Adrenal gland (tissue), 19 donors: ENCODE measurements at regions of chr2 and their contacts with region 1.

Region 1: GRCh38 chr2:215949991-215950404 is 63.4 kb downstream of the MREG start:
- DNase-seq: no peak
- H3K4me3 ChIP-seq: no peak overlapping the region
- H3K27ac ChIP-seq: no peak overlapping the region
- H3K4me1 ChIP-seq: peaks cover 0 to 7% of the 10 kb centered on the region in 2 donors
- H3K27me3 ChIP-seq: no peaks in the 10 kb centered on the region
- CTCF ChIP-seq: peak; percentile 26 to 68 (median 53)
- POLR2A ChIP-seq: no peak

Region 2: DNA sequence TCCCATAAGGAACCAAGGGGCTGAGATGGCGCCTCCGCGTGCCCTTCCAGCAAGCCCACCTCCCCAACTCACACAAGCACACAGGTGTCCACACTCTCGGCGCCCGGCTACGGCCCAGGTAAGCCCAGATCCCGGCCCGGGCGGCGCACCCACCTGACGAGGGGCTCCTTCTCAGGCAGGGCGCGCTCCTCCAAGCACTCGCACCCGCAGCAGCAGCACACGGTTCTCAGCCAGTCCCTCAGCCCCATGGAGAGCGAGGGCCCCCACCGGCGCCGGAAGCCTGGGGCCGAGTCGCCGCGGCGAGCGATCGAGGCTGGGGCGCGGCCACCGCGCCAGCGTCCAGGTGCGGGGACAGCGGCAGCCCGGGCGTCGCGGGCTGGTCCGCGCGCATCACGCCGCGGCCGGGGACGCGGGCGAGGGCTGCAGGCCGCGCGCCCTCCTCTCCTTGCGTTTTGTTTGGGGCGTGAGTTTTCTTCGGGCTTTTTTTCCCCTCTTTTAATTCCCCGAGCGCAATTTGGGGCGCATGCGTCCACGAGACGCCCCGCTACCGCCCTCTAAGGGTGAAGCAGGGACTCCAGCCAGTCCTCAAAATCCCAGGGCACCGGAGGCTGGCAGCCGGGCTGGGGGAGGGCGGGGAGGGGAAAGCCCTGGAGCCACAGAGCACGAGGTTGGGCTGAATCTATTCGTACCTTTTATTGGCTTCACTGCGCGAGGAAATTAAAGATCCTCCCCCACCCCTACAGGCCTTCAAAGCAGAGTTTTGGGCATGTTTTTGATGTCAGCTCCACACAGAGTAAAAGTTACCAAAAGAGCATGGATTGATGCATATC is 63.3 kb after region 1 on chr2 and contains the start of gene MREG:
- intact Hi-C with region 1: loop called (anchors 5 to 10 kb)
- DNase-seq: peak; percentile 78 to 89 (median 82)
- H3K4me3 ChIP-seq: peak within 1 kb of the TSS in 3 of 4 donors; percentile 37 to 76 (median 45)
- H3K27ac ChIP-seq: peak within 1 kb of the TSS in 2 of 5 donors; percentile 58 to 71
- H3K4me1 ChIP-seq: peaks cover 0 to 6% of the 10 kb centered on the region in 2 donors
- H3K27me3 ChIP-seq: no peaks in the 10 kb centered on the region
- CTCF ChIP-seq: peak; percentile 23 to 67 (median 47)
- POLR2A ChIP-seq: peak in 1 of 2 donors; percentile 18
- total RNA-seq, gene MREG: 4.2 to 14.4 (median 6.4) TPM